Activated CD4-positive, alpha-beta memory T cell treated with anti-CD3 and anti-CD28 coated beads, Interleukin-2, amount 10 ng/mL, durations not matched to agents 7 days and 5 days (primary cell): ENCODE measurements at regions of chr3 and their contacts with region 1.

Region 1: DNA sequence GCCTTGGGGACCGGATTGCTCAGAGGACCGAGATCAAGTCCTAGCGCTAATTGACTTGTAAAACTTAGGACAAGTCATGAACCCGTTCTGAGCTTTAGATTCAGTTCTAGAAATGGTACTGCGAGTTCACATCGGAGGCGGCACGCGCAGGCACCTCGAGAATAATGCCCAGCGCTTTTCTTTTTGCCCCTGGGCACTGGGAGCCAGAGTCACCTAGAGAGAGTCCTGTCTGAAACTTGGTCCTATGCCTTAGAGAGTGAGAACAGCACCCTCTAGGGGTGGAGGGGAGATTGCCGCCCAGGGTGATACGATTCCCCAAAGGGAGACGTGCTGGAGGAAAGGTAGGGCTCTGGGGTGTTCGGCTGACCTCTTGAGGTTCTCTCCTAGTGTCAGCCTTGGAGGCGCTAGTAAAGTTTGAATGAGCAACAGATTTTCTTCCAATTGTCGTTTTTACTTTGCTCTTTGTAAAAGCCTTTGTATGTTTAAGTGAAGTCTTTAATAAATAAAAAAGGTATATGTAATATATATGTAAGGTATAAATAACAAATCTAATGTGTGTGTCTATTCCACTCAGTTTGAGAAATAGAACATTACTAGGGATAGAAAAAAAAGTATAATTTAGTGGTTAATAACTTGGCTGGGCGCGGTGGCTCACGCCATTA is 826 bp downstream of the EEF1AKMT4 start:
- DNase-seq: peak; percentile 90
- H3K4me3 Mint-ChIP-seq: peak overlapping the region; percentile 83
- H3K27ac Mint-ChIP-seq: peak overlapping the region; percentile 89
- H3K4me1 Mint-ChIP-seq: peaks cover 15% of the 10 kb centered on the region
- H3K27me3 Mint-ChIP-seq: no peaks in the 10 kb centered on the region

Region 2: GRCh38 chr3:184126006-184126405 is 124.3 kb before region 1 on chr3:
- CTCF ChIA-PET with region 1: no interaction called
- POLR2A ChIA-PET with region 1: no interaction called
- DNase-seq: no peak
- H3K4me3 Mint-ChIP-seq: no peak overlapping the region
- H3K27ac Mint-ChIP-seq: no peak overlapping the region
- H3K4me1 Mint-ChIP-seq: no peaks in the 10 kb centered on the region
- H3K27me3 Mint-ChIP-seq: peaks cover 8% of the 10 kb centered on the region

Region 3: DNA sequence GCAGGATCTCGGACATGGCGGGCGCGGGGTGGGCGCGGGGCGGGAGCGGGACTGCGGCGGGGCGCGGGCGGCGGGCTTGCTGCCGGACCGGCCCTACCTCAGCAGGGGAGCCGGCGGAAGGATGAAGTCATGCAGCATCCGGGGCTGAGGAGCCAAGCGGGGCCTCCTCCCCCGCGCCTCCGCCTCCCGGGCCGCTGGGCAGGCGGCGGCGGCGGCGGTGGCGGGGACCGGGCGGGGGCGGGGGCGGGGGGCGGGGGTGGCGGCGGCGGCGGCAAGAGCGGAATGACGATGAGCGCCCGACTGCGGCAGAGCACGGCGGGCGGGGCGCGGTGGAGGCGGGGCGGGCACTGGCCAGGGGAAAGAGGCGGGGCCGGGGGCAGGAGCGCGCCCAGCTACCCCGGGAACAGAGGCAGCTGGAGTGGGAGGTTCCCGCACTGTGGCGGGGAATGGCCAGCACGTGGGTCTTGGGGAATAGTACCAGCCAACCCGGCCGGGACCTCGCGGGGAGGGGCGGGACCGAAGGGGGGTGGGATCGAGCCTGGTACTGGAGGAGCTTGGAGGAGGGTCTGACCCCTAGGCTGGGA is 11.1 kb after region 1 on chr3 and contains the start of gene CAMK2N2:
- CTCF ChIA-PET with region 1: interaction called, 6 read pairs
- POLR2A ChIA-PET with region 1: interaction called, 10 read pairs
- DNase-seq: peak; percentile 59
- H3K4me3 Mint-ChIP-seq: peak within 1 kb of the TSS; percentile 77
- H3K27ac Mint-ChIP-seq: no peak within 1 kb of the TSS
- H3K4me1 Mint-ChIP-seq: peaks cover 21% of the 10 kb centered on the region
- H3K27me3 Mint-ChIP-seq: peaks cover 41% of the 10 kb centered on the region
- total RNA-seq, gene CAMK2N2: 0.23 TPM in 1 of 2 experiments, not detected in the other